ENCODE measurements at regions of chr7 and their contacts with region 1.

Region 1: DNA sequence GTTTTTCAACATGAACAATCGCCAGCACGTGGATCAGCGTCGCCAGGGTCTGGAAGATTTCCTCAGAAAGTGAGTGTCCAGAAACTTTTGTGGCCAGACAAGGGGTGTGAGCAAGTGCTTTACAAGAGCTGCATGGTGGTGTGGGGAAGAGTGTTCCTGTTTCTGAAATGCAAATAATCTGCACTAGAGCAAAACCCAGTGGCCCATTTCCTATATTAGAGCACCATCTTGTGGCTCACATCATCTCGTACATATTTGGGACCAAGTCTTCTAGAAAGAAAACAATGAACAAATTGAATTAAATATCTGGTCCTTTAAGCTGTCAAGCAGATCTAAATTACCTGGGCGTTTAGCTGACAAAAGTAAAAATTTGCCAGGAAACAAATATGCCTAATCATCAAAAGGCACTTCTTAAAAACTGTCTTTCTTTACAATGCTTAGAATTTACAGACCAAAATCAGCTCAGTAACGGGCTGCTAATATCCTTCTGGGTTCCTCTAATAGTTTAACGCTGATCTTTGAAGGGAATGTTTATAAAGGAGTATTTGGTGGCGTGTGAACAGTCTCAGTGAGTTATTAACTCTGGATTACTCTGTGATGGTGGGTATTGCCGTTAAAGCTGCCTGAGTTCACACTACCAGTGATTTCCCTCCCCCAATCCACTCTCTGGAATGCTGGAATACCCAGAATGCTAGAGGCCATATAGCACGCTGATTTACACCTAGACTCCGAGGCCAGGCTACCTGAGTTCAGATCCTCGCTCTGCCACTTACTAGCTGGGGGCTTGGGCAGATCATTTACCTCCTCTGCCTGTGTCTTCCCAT is 73.6 kb downstream of the SNX10 start:
- DNase-seq: peak in 1 of 2 donors; percentile 85
- ATAC-seq: peak; percentile 79 to 88 (median 84)
- H3K4me3 ChIP-seq: no peak overlapping the region
- H3K4me3 Mint-ChIP-seq: no peak overlapping the region
- H3K27ac ChIP-seq: no peak overlapping the region
- H3K27ac Mint-ChIP-seq: peak overlapping the region in 1 of 2 donors; percentile 61
- H3K4me1 ChIP-seq: no peaks in the 10 kb centered on the region
- H3K4me1 Mint-ChIP-seq: peaks cover 5 to 11% of the 10 kb centered on the region in 2 donors
- H3K27me3 ChIP-seq: no peaks in the 10 kb centered on the region
- H3K27me3 Mint-ChIP-seq: no peaks in the 10 kb centered on the region
- CTCF ChIP-seq: peak; percentile 84

Region 2: GRCh38 chr7:25894902-25895791 is 470.1 kb before region 1 on chr7:
- intact Hi-C with region 1: loop called (anchors 1 kb)
- DNase-seq: peak; percentile 57 to 70
- ATAC-seq: peak; percentile 56 to 74 (median 70)
- H3K4me3 ChIP-seq: no peak overlapping the region
- H3K4me3 Mint-ChIP-seq: peak overlapping the region; percentile 77
- H3K27ac ChIP-seq: no peak overlapping the region
- H3K27ac Mint-ChIP-seq: peak overlapping the region in 1 of 2 donors; percentile 56
- H3K4me1 ChIP-seq: peaks cover 10% of the 10 kb centered on the region
- H3K4me1 Mint-ChIP-seq: peaks cover 16 to 28% of the 10 kb centered on the region in 2 donors
- H3K27me3 ChIP-seq: peaks cover 6% of the 10 kb centered on the region
- H3K27me3 Mint-ChIP-seq: peaks cover 31 to 41% of the 10 kb centered on the region in 2 donors
- CTCF ChIP-seq: peak; percentile 68

Region 3: DNA sequence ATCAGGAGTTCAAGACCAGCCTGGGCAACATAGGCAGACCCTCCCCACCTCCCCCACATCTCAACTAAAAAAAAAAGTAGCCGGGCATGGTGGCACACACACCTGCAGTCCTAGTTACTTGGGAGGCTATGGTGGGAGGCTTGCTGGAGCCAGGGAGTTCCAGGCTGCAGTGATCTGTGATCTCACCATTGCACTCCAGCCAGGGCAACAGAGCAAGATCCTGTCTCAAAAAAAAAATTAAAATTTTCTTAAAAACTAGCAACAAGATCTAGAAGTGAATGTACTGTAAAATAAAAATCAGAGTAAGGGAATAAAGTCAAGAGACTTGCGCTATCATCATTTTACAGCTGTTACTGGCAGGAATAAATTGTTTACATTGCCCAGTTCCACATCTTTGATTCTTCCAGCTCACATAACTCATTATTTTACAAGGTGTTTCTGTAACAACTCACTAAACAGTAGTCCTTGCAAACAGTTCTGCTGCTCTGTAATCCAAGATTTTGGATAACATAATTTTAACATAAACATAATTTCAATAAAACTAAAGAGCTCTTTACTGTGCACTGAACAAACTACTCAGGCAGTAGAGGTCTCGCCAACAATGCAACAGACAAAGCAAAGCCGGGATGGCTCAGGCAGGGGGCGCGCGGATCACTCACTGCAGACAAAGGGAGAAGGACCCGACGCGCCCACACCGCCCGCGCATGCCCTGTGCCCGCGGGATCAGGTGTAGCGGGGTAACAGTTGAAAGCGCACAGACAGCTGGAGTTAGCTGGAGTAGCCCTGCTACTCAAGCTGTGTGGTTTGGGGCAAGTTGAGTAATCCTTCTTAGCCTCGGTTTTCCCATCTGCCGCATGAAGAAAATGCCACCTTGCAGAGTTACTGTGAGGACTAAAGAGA is 286.6 kb before region 1 on chr7:
- intact Hi-C with region 1: loop called (anchors 5 kb)
- DNase-seq: peak; percentile 59 to 87
- ATAC-seq: peak; percentile 89 to 99 (median 99)
- H3K4me3 ChIP-seq: no peak overlapping the region
- H3K4me3 Mint-ChIP-seq: no peak overlapping the region
- H3K27ac ChIP-seq: no peak overlapping the region
- H3K27ac Mint-ChIP-seq: no peak overlapping the region
- H3K4me1 ChIP-seq: peaks cover 4% of the 10 kb centered on the region
- H3K4me1 Mint-ChIP-seq: no peaks in the 10 kb centered on the region
- H3K27me3 ChIP-seq: peaks cover 8% of the 10 kb centered on the region
- H3K27me3 Mint-ChIP-seq: peaks cover 31 to 50% of the 10 kb centered on the region in 2 donors
- CTCF ChIP-seq: peak; percentile 18

Region 4: GRCh38 chr7:26090927-26091519 is 274.3 kb before region 1 on chr7:
- intact Hi-C with region 1: loop called (anchors 1 kb)
- DNase-seq: peak in 1 of 2 donors; percentile 72
- ATAC-seq: peak; percentile 60 to 77 (median 63)
- H3K4me3 ChIP-seq: no peak overlapping the region
- H3K4me3 Mint-ChIP-seq: peak overlapping the region; percentile 57
- H3K27ac ChIP-seq: no peak overlapping the region
- H3K27ac Mint-ChIP-seq: no peak overlapping the region
- H3K4me1 ChIP-seq: no peaks in the 10 kb centered on the region
- H3K4me1 Mint-ChIP-seq: peaks cover 7 to 14% of the 10 kb centered on the region in 2 donors
- H3K27me3 ChIP-seq: no peaks in the 10 kb centered on the region
- H3K27me3 Mint-ChIP-seq: peaks cover 0 to 9% of the 10 kb centered on the region in 2 donors
- CTCF ChIP-seq: peak; percentile 61

Region 5: GRCh38 chr7:26278770-26279169 is 86.5 kb before region 1 on chr7:
- intact Hi-C with region 1: loop called (anchors 1 kb)
- DNase-seq: peak in 1 of 2 donors; percentile 58
- ATAC-seq: peak; percentile 61 to 75 (median 71)
- H3K4me3 ChIP-seq: no peak overlapping the region
- H3K4me3 Mint-ChIP-seq: peak overlapping the region; percentile 50
- H3K27ac ChIP-seq: peak overlapping the region; percentile 38
- H3K27ac Mint-ChIP-seq: no peak overlapping the region
- H3K4me1 ChIP-seq: peaks cover 8% of the 10 kb centered on the region
- H3K4me1 Mint-ChIP-seq: peaks cover 7 to 8% of the 10 kb centered on the region in 2 donors
- H3K27me3 ChIP-seq: no peaks in the 10 kb centered on the region
- H3K27me3 Mint-ChIP-seq: no peaks in the 10 kb centered on the region
- CTCF ChIP-seq: peak; percentile 27

Region 6: GRCh38 chr7:26291699-26292538 is 73.4 kb before region 1 on chr7 and contains the start of gene SNX10:
- intact Hi-C with region 1: loop called (anchors 5 kb)
- DNase-seq: peak; percentile 70 to 89
- ATAC-seq: peak; percentile 66 to 83 (median 73)
- H3K4me3 ChIP-seq: peak within 1 kb of the TSS; percentile 98
- H3K4me3 Mint-ChIP-seq: peak within 1 kb of the TSS; percentile 97
- H3K27ac ChIP-seq: peak within 1 kb of the TSS; percentile 94
- H3K27ac Mint-ChIP-seq: peak within 1 kb of the TSS; percentile 97
- H3K4me1 ChIP-seq: peaks cover 42% of the 10 kb centered on the region
- H3K4me1 Mint-ChIP-seq: peaks cover 36 to 46% of the 10 kb centered on the region in 2 donors
- H3K27me3 ChIP-seq: no peaks in the 10 kb centered on the region
- H3K27me3 Mint-ChIP-seq: no peaks in the 10 kb centered on the region
- CTCF ChIP-seq: no peak
- total RNA-seq, gene SNX10: 17.2 to 26.8 (median 21.3) TPM

Region 7: GRCh38 chr7:26500749-26501352 is 135.6 kb after region 1 on chr7:
- intact Hi-C with region 1: loop called (anchors 2 kb)
- DNase-seq: peak in 1 of 2 donors; percentile 38
- ATAC-seq: no peak
- H3K4me3 ChIP-seq: no peak overlapping the region
- H3K4me3 Mint-ChIP-seq: no peak overlapping the region
- H3K27ac ChIP-seq: no peak overlapping the region
- H3K27ac Mint-ChIP-seq: no peak overlapping the region
- H3K4me1 ChIP-seq: no peaks in the 10 kb centered on the region
- H3K4me1 Mint-ChIP-seq: no peaks in the 10 kb centered on the region
- H3K27me3 ChIP-seq: no peaks in the 10 kb centered on the region
- H3K27me3 Mint-ChIP-seq: peaks cover 7 to 31% of the 10 kb centered on the region in 2 donors
- CTCF ChIP-seq: peak; percentile 12